ENCODE measurements at regions of chr22 and their contacts with region 1.

Region 1: DNA sequence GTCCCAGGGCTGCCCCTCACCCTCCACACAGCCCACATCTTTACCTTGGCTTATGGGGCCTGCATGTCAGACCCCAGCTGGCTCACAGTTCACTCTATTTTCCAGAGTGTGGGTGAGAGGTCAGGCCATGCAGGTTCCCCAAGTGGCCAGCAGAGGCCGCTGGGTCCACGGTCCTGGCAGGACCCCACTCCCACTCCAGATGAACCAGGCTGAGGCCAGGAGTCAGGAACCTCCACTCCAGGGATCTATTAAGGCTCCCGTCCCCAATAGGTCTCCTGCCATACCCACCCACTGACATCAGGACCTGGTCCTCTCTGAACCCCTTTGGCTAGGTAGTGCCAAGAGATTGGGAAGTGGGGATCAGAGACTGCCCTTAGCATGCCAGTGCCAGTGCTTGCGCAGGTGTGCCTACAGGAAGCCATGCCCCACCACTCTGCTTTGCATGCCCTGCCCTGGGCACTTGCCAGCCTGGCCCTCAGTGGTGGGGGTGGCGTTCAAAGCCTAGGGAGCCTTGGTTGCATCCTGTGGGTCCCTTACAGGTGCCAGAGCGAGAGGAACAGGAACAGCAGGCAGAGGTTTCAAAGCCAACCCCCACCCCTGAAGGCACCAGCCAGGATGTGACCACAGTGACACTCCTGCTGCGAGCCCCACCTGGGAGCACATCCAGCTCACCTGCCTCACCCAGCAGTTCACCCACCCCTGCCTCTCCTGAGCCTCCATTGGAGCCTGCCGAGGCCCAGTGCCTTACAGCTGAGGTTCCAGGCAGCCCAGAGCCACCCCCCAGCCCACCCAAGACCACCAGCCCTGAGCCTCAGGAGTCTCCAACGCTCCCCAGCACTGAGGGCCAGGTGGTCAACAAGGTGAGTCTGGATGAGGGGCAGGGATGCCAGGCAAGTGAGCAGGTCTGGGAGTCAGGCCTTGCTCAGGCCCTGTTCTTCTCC is 8.3 kb downstream of the SMTN start:
- H3K4me3 Mint-ChIP-seq: no peak overlapping the region
- H3K27ac Mint-ChIP-seq: no peak overlapping the region
- H3K4me1 Mint-ChIP-seq: peaks cover 15% of the 10 kb centered on the region
- H3K27me3 Mint-ChIP-seq: no peaks in the 10 kb centered on the region

Region 2: GRCh38 chr22:31075961-31076360 is 13.5 kb before region 1 on chr22:
- intact Hi-C with region 1: no loop called
- H3K4me3 Mint-ChIP-seq: no peak overlapping the region
- H3K27ac Mint-ChIP-seq: no peak overlapping the region
- H3K4me1 Mint-ChIP-seq: peaks cover 11% of the 10 kb centered on the region
- H3K27me3 Mint-ChIP-seq: peaks cover 7% of the 10 kb centered on the region

Region 3: GRCh38 chr22:31230871-31231621 is 141.6 kb after region 1 on chr22:
- intact Hi-C with region 1: loop called (anchors 1 kb)
- H3K4me3 Mint-ChIP-seq: peak overlapping the region; percentile 17
- H3K27ac Mint-ChIP-seq: peak overlapping the region; percentile 89
- H3K4me1 Mint-ChIP-seq: peaks cover 77% of the 10 kb centered on the region
- H3K27me3 Mint-ChIP-seq: no peaks in the 10 kb centered on the region

Measured in dendritic cell treated with granulocyte-macrophage colony-stimulating factor and Interleukin-4, amounts not matched to agents 40 ng/mL and 50 ng/mL, for 4 days (primary cell).